ENCODE measurements at regions of chr4 and their contacts with region 1.

Region 1: GRCh38 chr4:74189331-74190043 is 31.6 kb downstream of the MTHFD2L start:
- DNase-seq: peak in 2 of 5 donors; percentile 56 to 82
- H3K4me3 ChIP-seq: no peak overlapping the region
- H3K27ac ChIP-seq: no peak overlapping the region
- H3K4me1 ChIP-seq: no peaks in the 10 kb centered on the region
- H3K27me3 ChIP-seq: no peaks in the 10 kb centered on the region
- CTCF ChIP-seq: peak; percentile 39

Region 2: GRCh38 chr4:74006009-74006476 is 183.4 kb before region 1 on chr4:
- intact Hi-C with region 1: no loop called
- DNase-seq: no peak
- H3K4me3 ChIP-seq: no peak overlapping the region
- H3K27ac ChIP-seq: no peak overlapping the region
- H3K4me1 ChIP-seq: no peaks in the 10 kb centered on the region
- H3K27me3 ChIP-seq: no peaks in the 10 kb centered on the region
- CTCF ChIP-seq: no peak

Region 3: DNA sequence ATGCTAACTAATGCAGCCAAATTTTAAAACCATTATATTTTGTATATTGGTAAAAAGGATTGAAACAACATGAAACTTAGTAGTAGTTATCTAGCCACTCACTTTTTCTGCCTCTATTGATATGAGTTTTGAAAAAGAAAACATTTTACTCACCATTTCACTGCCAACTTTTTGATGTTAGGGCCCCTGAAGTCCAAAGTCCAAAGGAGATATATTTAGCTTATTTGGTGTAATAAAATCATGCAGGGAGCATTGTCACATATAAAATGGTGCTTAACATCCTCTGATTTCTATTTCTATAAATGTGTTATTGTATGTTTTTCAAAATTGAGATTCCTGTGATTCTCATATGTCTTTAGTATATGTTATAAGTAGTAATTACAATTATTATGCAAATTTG is 126.5 kb before region 1 on chr4:
- intact Hi-C with region 1: no loop called
- DNase-seq: no peak
- H3K4me3 ChIP-seq: no peak overlapping the region
- H3K27ac ChIP-seq: no peak overlapping the region
- H3K4me1 ChIP-seq: no peaks in the 10 kb centered on the region
- H3K27me3 ChIP-seq: no peaks in the 10 kb centered on the region
- CTCF ChIP-seq: no peak

Region 4: DNA sequence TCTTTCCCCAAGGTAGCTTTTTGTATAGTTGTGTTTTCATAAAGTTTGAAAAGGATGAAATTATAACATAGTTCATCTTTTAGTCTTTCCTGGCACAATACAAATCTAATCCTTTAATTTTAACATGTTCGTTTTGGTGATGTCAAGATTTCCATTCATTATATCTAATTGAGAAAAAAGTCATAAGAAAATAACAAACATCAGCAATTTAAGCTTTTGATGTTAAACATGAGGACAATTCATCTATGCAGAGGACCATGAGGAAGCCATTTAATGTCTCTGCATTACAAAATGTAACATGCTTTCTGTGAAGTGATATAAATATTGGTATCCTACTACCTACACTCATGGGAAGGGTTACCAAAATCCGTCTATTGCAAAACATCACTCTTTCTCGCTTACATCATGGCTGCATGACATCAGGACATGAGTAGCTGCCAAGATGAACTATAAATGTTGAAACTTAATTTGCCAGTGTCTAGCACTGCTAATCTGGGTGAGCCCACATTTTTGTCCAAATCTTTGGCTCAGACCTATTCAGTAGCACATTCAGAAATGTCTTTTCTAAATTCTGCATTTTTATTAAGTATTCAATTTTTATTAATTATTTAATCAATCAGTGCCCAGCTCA is 128.2 kb after region 1 on chr4:
- intact Hi-C with region 1: loop called (anchors 5 kb)
- DNase-seq: no peak
- H3K4me3 ChIP-seq: no peak overlapping the region
- H3K27ac ChIP-seq: no peak overlapping the region
- H3K4me1 ChIP-seq: no peaks in the 10 kb centered on the region
- H3K27me3 ChIP-seq: no peaks in the 10 kb centered on the region
- CTCF ChIP-seq: no peak

Region 5: DNA sequence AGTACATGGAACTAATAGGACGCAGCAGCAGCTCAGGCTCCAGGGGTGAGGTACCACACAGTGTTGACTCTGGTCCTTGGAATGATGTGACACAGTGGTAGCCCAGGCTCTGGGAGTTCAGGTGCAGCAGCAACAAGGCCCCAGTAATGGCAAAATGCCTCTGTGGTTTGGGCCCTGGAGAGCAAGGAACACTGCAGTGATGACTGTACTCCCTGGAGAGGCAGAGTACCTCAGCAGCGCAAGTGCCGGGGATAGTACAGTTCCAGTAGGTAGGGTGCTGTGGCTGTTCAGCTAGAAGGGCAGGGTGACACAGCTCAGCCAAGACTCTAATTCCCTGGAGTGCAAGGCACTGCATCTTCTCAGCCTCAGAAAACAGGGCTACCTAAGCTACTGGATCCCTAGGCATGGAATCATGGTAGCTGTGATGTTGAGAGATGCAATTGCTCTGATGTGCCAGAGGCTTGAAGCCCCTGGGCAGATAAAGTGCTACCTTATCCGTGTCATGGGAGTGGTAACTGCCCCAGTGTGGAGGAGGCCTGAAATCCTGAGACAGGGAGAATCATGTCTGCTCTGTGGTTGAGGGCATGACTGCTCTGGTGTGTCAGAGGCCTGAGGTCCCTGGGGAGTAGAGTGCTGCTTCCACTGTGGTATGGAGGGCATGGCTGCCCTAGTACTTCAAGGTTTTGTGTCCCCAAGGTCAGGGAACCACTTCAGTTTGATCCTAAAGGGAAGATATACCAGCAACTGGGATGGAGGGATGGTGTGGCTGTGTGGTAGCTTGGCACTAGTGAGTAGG is 310.7 kb after region 1 on chr4:
- intact Hi-C with region 1: no loop called
- DNase-seq: no peak
- H3K4me3 ChIP-seq: no peak overlapping the region
- H3K27ac ChIP-seq: no peak overlapping the region
- H3K4me1 ChIP-seq: no peaks in the 10 kb centered on the region
- H3K27me3 ChIP-seq: no peaks in the 10 kb centered on the region
- CTCF ChIP-seq: no peak